PC-3 (cell line): ENCODE measurements at regions of chr12 and their contacts with region 1.

Region 1: GRCh38 chr12:44317651-44318126 is 481.8 kb downstream of the TMEM117 start:
- DNase-seq: peak; percentile 57
- ATAC-seq: peak; percentile 42; the same call in 1 of the 2 replicates
- H3K4me3 ChIP-seq: no peak overlapping the region
- H3K27ac ChIP-seq: no peak overlapping the region
- H3K4me1 ChIP-seq: peaks cover 5% of the 10 kb centered on the region; the same call in 1 of the 2 replicates
- H3K27me3 ChIP-seq: no peaks in the 10 kb centered on the region
- CTCF ChIP-seq: peak; percentile 64

Region 2: GRCh38 chr12:43957732-43958372 is 359.8 kb before region 1 on chr12:
- CTCF ChIA-PET with region 1: no interaction called
- POLR2A ChIA-PET with region 1: no interaction called
- intact Hi-C with region 1: loop called (anchors 5 kb)
- DNase-seq: peak; percentile 79
- ATAC-seq: peak; percentile 87
- H3K4me3 ChIP-seq: no peak overlapping the region
- H3K27ac ChIP-seq: no peak overlapping the region
- H3K4me1 ChIP-seq: no peaks in the 10 kb centered on the region
- H3K27me3 ChIP-seq: no peaks in the 10 kb centered on the region
- CTCF ChIP-seq: peak; percentile 83

Region 3: DNA sequence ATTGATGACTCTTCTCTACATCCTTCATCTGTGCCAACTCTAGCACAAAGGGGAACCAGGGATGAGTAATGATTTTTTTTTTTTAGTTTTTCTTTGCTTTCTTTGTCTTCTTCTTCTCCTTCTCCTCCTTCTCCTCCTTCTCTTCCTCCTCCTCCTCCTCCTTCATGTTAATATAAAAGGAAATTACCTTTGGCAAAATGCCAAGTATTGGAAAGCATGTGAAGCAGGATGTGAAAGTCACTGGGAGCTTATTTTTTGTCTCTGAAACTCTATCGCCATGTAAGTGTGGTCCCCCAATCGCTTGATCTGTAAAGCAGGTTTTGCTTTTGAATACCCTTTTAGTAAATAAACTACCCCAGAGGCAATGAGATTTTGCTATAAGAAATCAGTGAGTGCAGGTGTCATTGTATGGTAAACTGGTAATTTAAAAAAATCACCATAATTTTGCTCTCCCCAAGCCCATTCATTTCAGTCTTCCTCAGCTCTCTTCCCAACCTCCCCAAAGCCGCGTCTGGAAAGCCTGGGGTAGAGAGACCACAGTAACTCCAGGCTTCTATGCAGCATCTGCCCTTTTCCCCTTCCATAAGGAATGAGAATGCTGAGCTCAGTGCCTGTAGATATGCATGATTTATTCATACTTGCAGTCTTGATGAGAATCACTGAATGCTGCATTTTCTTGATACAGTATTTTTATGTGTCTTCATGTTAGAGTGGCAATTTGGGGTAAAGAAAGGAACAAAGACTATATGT is 93.1 kb before region 1 on chr12:
- CTCF ChIA-PET with region 1: no interaction called
- POLR2A ChIA-PET with region 1: no interaction called
- intact Hi-C with region 1: no loop called
- DNase-seq: no peak
- ATAC-seq: no peak
- H3K4me3 ChIP-seq: no peak overlapping the region
- H3K27ac ChIP-seq: no peak overlapping the region
- H3K4me1 ChIP-seq: no peaks in the 10 kb centered on the region
- H3K27me3 ChIP-seq: no peaks in the 10 kb centered on the region
- CTCF ChIP-seq: no peak

Region 4: GRCh38 chr12:44240186-44240585 is 77.5 kb before region 1 on chr12:
- CTCF ChIA-PET with region 1: no interaction called
- POLR2A ChIA-PET with region 1: no interaction called
- intact Hi-C with region 1: loop called (anchors 2 kb)
- DNase-seq: no peak
- ATAC-seq: no peak
- H3K4me3 ChIP-seq: no peak overlapping the region
- H3K27ac ChIP-seq: no peak overlapping the region
- H3K4me1 ChIP-seq: no peaks in the 10 kb centered on the region
- H3K27me3 ChIP-seq: no peaks in the 10 kb centered on the region
- CTCF ChIP-seq: no peak

Region 5: DNA sequence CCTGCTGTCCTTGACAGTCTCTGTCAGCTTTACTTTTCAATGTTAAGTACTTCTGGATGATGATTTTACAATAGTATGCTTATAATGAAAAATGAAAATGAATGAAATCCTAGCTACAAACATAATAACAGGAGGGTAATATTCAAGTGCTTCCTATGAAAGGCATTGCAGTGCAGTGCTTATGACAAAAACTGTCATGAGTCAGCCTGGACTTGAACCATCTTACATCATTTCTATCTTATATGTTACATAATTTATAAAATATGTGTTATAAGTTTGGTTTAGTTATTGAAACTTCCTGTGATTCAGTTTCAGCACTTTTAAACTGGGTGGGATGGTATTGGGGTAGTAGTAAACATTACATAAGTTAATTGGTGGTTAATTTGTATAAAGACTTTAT is 30.1 kb before region 1 on chr12:
- CTCF ChIA-PET with region 1: no interaction called
- POLR2A ChIA-PET with region 1: no interaction called
- intact Hi-C with region 1: loop called (anchors 1 kb)
- DNase-seq: no peak
- ATAC-seq: peak; percentile 53
- H3K4me3 ChIP-seq: no peak overlapping the region
- H3K27ac ChIP-seq: no peak overlapping the region
- H3K4me1 ChIP-seq: no peaks in the 10 kb centered on the region
- H3K27me3 ChIP-seq: no peaks in the 10 kb centered on the region
- CTCF ChIP-seq: no peak

Region 6: GRCh38 chr12:44372259-44372658 is 54.6 kb after region 1 on chr12:
- CTCF ChIA-PET with region 1: no interaction called
- POLR2A ChIA-PET with region 1: no interaction called
- intact Hi-C with region 1: loop called (anchors 1 kb)
- DNase-seq: peak; percentile 98
- ATAC-seq: peak; percentile 74
- H3K4me3 ChIP-seq: no peak overlapping the region
- H3K27ac ChIP-seq: peak overlapping the region; percentile 16; the same call in 1 of the 2 replicates
- H3K4me1 ChIP-seq: peaks cover 34% of the 10 kb centered on the region
- H3K27me3 ChIP-seq: no peaks in the 10 kb centered on the region
- CTCF ChIP-seq: no peak

Region 7: DNA sequence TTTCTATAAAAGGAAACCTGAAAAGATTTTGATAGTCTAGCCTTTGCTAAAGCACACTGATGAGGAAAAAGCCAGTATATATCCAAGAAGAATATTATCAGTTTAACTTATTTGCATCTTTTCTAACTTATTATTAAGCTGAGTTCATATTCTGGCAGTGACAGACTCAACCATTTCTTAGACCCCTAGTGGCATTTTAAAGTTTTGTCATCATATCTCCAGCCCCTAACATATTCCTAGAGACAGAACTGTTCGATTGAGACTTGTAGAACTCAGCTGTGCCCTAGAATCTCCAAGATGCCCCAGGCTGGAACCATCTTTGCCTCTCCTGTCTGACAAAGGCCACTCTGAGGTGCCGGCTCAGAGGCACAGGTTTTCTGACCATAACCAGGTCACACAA is 192.8 kb after region 1 on chr12:
- CTCF ChIA-PET with region 1: no interaction called
- POLR2A ChIA-PET with region 1: no interaction called
- intact Hi-C with region 1: loop called (anchors 10 kb)
- DNase-seq: peak; percentile 14
- ATAC-seq: no peak
- H3K4me3 ChIP-seq: no peak overlapping the region
- H3K27ac ChIP-seq: no peak overlapping the region
- H3K4me1 ChIP-seq: no peaks in the 10 kb centered on the region
- H3K27me3 ChIP-seq: 0 out of 2 replicates have a peak, but pooled peaks cover 12% of the 10 kb centered on the region
- CTCF ChIP-seq: peak; percentile 36; the same call in 1 of the 2 replicates

Region 8: GRCh38 chr12:44947163-44947562 is 629.5 kb after region 1 on chr12:
- CTCF ChIA-PET with region 1: no interaction called
- POLR2A ChIA-PET with region 1: no interaction called
- intact Hi-C with region 1: loop called (anchors 5 kb)
- DNase-seq: no peak
- ATAC-seq: no peak
- H3K4me3 ChIP-seq: no peak overlapping the region
- H3K27ac ChIP-seq: no peak overlapping the region
- H3K4me1 ChIP-seq: no peaks in the 10 kb centered on the region; the same call in 1 of the 2 replicates
- H3K27me3 ChIP-seq: peaks cover 14% of the 10 kb centered on the region
- CTCF ChIP-seq: no peak